ENCODE measurements at regions of chr2 and their contacts with region 1.

Region 1: DNA sequence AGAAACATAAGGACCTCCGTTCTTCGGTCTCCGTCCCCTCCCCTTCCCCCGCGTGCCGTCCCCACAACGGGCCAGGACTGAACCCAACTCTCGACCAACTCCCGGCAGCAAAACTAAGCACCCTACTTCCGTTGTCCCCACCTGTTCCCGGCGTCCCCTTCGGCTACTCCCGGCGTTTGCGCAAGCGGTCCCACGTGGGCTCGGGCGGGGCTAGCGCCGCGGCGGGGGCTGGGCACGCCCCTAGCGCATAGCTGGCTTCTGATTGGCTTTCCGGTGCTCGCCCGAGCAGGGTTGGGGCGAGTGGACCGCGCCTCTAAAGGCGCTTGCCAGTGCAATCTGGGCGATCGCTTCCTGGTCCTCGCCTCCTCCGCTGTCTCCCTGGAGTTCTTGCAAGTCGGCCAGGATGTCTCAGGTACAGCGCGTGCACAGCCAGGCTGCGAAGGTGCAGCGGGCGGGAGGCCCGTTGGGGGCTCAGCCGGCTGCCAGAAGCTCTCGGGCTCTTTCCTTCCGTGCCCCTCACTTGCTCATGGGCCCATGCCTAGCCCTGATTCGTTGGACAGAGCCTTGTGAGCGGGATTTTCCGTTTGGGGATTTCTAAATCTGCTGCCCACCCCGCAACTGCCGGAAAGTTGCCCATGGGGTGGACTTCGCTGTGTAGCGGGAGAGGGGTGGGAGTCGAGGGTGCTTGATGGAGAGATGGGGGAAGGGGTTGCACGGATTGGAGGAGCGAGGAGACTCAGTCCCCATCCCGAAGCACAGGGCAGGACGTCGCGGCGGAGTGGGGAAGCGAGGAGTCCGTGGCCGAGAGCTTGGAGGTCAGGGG is at the starts of genes C2orf76 and DBI:
- DNase-seq: peak; percentile 94
- ATAC-seq: peak; percentile 93
- H3K4me3 Mint-ChIP-seq: peak within 1 kb of the TSS; percentile 99
- H3K27ac Mint-ChIP-seq: peak within 1 kb of the TSS; percentile 93
- H3K4me1 Mint-ChIP-seq: peaks cover 23% of the 10 kb centered on the region
- H3K27me3 Mint-ChIP-seq: no peaks in the 10 kb centered on the region
- CTCF ChIP-seq: no peak
- total RNA-seq, gene C2orf76: 4.4 to 5.2 TPM (median 4.6 TPM) in 3 replicates
- total RNA-seq, gene DBI: 146 to 158 TPM (median 150 TPM) in 3 replicates

Region 2: DNA sequence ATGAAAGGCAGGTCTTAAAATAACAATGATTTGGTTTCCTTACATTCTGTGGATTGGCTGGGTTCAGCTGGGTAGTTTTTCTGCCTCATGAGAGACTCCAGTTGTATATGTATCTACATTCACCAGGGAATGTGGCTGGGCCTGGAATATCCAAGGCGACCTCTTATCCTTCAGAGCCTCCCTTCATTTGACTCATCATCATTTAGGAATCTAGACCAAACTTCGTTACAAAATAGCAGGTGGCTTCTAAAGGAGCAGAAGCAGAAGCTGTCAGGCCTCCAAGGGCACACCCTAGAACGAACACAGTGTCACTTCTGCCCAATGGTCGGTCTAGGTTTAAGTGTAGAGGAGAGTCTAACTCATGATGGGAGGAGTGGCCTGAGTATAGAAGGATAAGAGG is 723.6 kb before region 1 on chr2:
- CTCF ChIA-PET with region 1: no interaction called
- POLR2A ChIA-PET with region 1: no interaction called
- DNase-seq: no peak
- ATAC-seq: no peak; the same call in 1 of the 2 replicates
- H3K4me3 Mint-ChIP-seq: no peak overlapping the region
- H3K27ac Mint-ChIP-seq: no peak overlapping the region
- H3K4me1 Mint-ChIP-seq: peaks cover 18% of the 10 kb centered on the region
- H3K27me3 Mint-ChIP-seq: no peaks in the 10 kb centered on the region; the same call in 1 of the 2 replicates
- CTCF ChIP-seq: no peak

Region 3: DNA sequence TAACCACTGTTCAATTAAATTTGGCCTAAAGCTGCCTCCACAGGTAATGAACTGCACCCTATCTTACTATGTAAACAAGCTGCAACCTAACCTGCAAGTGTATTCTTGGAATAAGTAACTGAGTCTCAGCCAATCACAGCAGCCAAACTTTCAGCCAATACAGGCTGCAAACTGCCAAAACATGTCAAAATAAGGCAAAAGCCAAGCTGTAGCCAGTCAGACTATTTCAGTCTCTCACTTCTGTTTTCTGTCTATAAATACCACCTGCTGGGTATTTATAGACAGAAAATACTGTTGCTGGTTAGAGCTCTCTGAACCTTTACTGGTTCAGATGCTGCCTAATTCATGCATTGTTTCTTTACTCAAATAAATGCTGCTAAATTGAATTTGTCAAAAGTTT is 14.5 kb before region 1 on chr2:
- CTCF ChIA-PET with region 1: interaction called, 25 read pairs
- POLR2A ChIA-PET with region 1: interaction called, 5 read pairs
- DNase-seq: no peak
- ATAC-seq: peak; percentile 61; the same call in 1 of the 2 replicates
- H3K4me3 Mint-ChIP-seq: no peak overlapping the region
- H3K27ac Mint-ChIP-seq: no peak overlapping the region
- H3K4me1 Mint-ChIP-seq: peaks cover 15% of the 10 kb centered on the region
- H3K27me3 Mint-ChIP-seq: no peaks in the 10 kb centered on the region; the same call in 1 of the 2 replicates
- CTCF ChIP-seq: no peak